ENCODE measurements at regions of chr14 and their contacts with region 1.

Region 1: DNA sequence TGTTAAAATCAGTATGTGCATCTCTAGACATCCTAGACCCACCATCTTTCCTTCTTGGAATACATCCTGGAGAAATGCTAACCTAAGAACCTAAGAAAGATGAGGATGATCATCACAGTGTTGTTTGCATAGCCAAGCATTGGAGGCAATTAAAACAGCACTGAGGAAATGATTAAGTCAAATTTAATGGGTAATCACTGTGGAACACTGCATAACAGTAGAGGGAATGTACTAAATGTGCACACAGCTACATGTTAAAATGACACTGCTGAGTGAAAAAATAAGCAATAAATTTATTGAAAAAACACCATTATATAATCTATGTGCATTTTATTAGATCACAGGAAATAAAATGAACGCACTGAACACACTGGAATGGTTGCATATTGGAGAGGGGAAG is 987.1 kb upstream of the SEL1L start:
- DNase-seq: no peak
- ATAC-seq: no peak
- H3K4me3 ChIP-seq: no peak overlapping the region
- H3K27ac ChIP-seq: no peak overlapping the region
- H3K4me1 ChIP-seq: no peaks in the 10 kb centered on the region
- H3K27me3 ChIP-seq: no peaks in the 10 kb centered on the region
- CTCF ChIP-seq: no peak
- EP300 ChIP-seq: no peak
- POLR2A ChIP-seq: no peak
- RAD21 ChIP-seq: no peak

Region 2: DNA sequence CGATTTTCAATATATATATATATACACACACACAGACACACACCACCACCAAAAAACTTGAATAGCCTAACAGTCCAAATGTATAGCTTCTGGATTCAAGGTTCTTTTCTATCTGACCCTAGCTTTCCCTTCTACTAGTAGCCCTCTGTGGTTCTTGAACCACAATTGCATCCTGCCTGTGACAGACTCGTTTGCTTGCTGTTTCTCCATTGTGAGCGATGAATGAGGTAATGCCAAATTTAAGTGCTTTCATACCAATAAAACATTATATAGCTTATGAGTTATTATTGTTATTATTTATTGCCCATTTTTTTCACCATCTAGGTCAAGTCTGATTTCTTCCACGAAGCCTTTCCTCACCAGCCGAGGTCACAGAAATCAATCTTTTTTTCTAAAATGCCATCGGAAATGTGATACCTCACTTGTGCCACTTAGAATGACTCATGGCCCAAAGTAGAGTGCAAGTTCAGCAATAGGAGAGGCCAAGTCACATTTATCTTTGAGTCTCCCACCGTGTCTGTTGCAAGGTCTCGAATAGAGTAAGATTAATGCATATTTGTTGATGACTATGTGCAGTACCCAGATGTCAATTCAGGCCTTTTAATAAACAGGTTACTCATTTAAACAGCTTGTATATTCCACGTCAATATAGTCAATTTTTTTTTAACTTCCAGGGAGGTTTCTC is 28.7 kb after region 1 on chr14:
- CTCF ChIA-PET with region 1: no interaction called
- POLR2A ChIA-PET with region 1: no interaction called
- in situ Hi-C with region 1: no loop called
- intact Hi-C with region 1: no loop called
- DNase-seq: no peak
- ATAC-seq: no peak
- H3K4me3 ChIP-seq: no peak overlapping the region
- H3K27ac ChIP-seq: no peak overlapping the region
- H3K4me1 ChIP-seq: no peaks in the 10 kb centered on the region
- H3K27me3 ChIP-seq: no peaks in the 10 kb centered on the region
- CTCF ChIP-seq: no peak
- EP300 ChIP-seq: no peak
- POLR2A ChIP-seq: no peak
- RAD21 ChIP-seq: no peak

Region 3: GRCh38 chr14:84181072-84181471 is 1660.3 kb after region 1 on chr14:
- CTCF ChIA-PET with region 1: no interaction called
- POLR2A ChIA-PET with region 1: no interaction called
- in situ Hi-C with region 1: no loop called
- intact Hi-C with region 1: loop called (anchors 5 kb)
- DNase-seq: no peak
- ATAC-seq: no peak
- H3K4me3 ChIP-seq: no peak overlapping the region
- H3K27ac ChIP-seq: no peak overlapping the region
- H3K4me1 ChIP-seq: no peaks in the 10 kb centered on the region
- H3K27me3 ChIP-seq: no peaks in the 10 kb centered on the region
- CTCF ChIP-seq: no peak
- EP300 ChIP-seq: no peak
- POLR2A ChIP-seq: no peak
- RAD21 ChIP-seq: no peak